CD8-positive, alpha-beta T cell (primary cell): ENCODE measurements at regions of chr16 and their contacts with region 1.

Region 1: DNA sequence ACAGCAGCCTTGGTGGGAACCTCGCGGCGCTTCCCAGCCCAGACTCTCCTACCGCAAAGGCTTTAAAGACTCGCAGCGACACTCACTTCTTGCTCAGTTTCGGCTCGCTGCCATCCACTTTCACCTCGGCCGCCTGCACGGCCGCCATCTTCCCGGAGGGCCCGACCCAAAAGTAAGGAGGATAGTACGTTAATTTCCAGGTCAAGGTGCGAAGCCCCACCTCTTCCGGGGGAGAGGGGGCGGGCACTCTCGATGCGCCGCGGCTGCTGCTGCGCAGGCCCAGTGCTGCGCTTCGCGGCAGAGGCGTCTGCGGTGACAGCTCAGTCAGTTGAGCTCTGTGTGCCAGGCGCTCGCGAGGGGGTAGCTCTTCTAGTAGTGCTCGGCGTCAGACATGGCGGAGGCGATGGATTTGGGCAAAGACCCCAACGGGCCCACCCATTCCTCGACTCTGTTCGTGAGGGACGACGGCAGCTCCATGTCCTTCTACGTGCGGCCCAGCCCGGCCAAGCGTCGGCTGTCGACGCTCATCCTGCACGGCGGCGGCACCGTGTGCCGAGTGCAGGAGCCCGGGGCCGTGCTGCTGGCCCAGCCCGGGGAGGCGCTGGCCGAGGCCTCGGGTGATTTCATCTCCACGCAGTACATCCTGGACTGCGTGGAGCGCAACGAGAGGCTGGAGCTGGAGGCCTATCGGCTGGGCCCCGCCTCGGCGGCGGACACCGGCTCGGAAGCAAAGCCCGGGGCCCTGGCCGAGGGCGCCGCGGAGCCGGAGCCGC is at the starts of genes KARS1 and TERF2IP:
- DNase-seq: peak; percentile 92 to 98 (median 94)
- ATAC-seq: peak; percentile 83
- H3K4me3 ChIP-seq: peak within 1 kb of the TSS; percentile 72 to 91
- H3K4me3 Mint-ChIP-seq: peak within 1 kb of the TSS; percentile 100
- H3K27ac ChIP-seq: peak within 1 kb of the TSS; percentile 89 to 92
- H3K27ac Mint-ChIP-seq: peak within 1 kb of the TSS; percentile 96
- H3K4me1 ChIP-seq: peaks cover 52% of the 10 kb centered on the region
- H3K4me1 Mint-ChIP-seq: peaks cover 69% of the 10 kb centered on the region
- H3K27me3 ChIP-seq: no peaks in the 10 kb centered on the region
- H3K27me3 Mint-ChIP-seq: no peaks in the 10 kb centered on the region
- CTCF ChIP-seq: no peak
- total RNA-seq, gene KARS1: 162 to 168 TPM
- total RNA-seq, gene TERF2IP: 107 to 112 TPM

Region 2: DNA sequence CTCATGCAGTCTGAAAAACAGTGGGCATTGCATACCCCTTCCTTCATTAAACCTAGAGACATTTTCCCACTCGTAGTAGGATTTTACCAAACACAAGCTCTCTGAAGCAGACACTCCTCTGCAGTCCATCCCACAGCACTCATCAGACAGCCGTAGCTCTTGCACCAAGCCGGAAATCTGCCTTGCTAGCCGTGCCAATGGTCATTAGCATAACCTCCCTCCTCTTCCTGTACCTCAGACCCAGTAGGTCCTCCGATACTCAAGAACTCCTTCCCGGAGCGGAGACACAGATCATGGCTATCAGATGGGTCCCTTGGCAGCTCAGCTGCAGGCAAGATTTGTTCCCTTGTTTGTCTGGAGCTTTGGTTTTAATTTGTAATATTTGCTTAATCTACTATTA is 1834.2 kb before region 1 on chr16:
- CTCF ChIA-PET with region 1: no interaction called
- POLR2A ChIA-PET with region 1: no interaction called
- intact Hi-C with region 1: no loop called
- DNase-seq: no peak
- ATAC-seq: no peak
- H3K4me3 ChIP-seq: no peak overlapping the region
- H3K4me3 Mint-ChIP-seq: no peak overlapping the region
- H3K27ac ChIP-seq: no peak overlapping the region
- H3K27ac Mint-ChIP-seq: no peak overlapping the region
- H3K4me1 ChIP-seq: no peaks in the 10 kb centered on the region
- H3K4me1 Mint-ChIP-seq: no peaks in the 10 kb centered on the region
- H3K27me3 ChIP-seq: no peaks in the 10 kb centered on the region
- H3K27me3 Mint-ChIP-seq: no peaks in the 10 kb centered on the region
- CTCF ChIP-seq: no peak

Region 3: GRCh38 chr16:74666425-74667254 is 981.0 kb before region 1 on chr16 and contains the start of gene RFWD3:
- CTCF ChIA-PET with region 1: no interaction called
- POLR2A ChIA-PET with region 1: interaction called, 6 read pairs
- intact Hi-C with region 1: loop called in 1 of 2 experiments (anchors 5 kb)
- DNase-seq: peak; percentile 91 to 99 (median 95)
- ATAC-seq: peak; percentile 98
- H3K4me3 ChIP-seq: peak within 1 kb of the TSS; percentile 80 to 98
- H3K4me3 Mint-ChIP-seq: peak within 1 kb of the TSS; percentile 94
- H3K27ac ChIP-seq: peak within 1 kb of the TSS; percentile 85 to 90
- H3K27ac Mint-ChIP-seq: peak within 1 kb of the TSS; percentile 94
- H3K4me1 ChIP-seq: peaks cover 30% of the 10 kb centered on the region
- H3K4me1 Mint-ChIP-seq: peaks cover 36% of the 10 kb centered on the region
- H3K27me3 ChIP-seq: no peaks in the 10 kb centered on the region
- H3K27me3 Mint-ChIP-seq: no peaks in the 10 kb centered on the region
- CTCF ChIP-seq: no peak
- total RNA-seq, gene RFWD3: 43.7 to 49.7 TPM

Region 4: GRCh38 chr16:75148311-75149195 is 499.1 kb before region 1 on chr16 and contains the start of gene ZFP1:
- CTCF ChIA-PET with region 1: no interaction called
- POLR2A ChIA-PET with region 1: no interaction called
- intact Hi-C with region 1: loop called (anchors 1 to 5 kb)
- DNase-seq: peak; percentile 86 to 98 (median 95)
- ATAC-seq: peak; percentile 89
- H3K4me3 ChIP-seq: peak within 1 kb of the TSS; percentile 85 to 100
- H3K4me3 Mint-ChIP-seq: peak within 1 kb of the TSS; percentile 87
- H3K27ac ChIP-seq: peak within 1 kb of the TSS; percentile 84
- H3K27ac Mint-ChIP-seq: peak within 1 kb of the TSS; percentile 88
- H3K4me1 ChIP-seq: peaks cover 12% of the 10 kb centered on the region
- H3K4me1 Mint-ChIP-seq: peaks cover 16% of the 10 kb centered on the region
- H3K27me3 ChIP-seq: no peaks in the 10 kb centered on the region
- H3K27me3 Mint-ChIP-seq: no peaks in the 10 kb centered on the region
- CTCF ChIP-seq: no peak
- total RNA-seq, gene ZFP1: 11.9 to 12.9 TPM

Region 5: GRCh38 chr16:75495076-75495674 is 152.5 kb before region 1 on chr16 and contains the start of gene CHST6:
- CTCF ChIA-PET with region 1: no interaction called
- POLR2A ChIA-PET with region 1: no interaction called
- intact Hi-C with region 1: no loop called
- DNase-seq: peak in 4 of 9 experiments; percentile 1 to 42 (median 28)
- ATAC-seq: peak; percentile 46
- H3K4me3 ChIP-seq: peak within 1 kb of the TSS; percentile 15 to 48
- H3K4me3 Mint-ChIP-seq: peak within 1 kb of the TSS; percentile 72
- H3K27ac ChIP-seq: no peak within 1 kb of the TSS
- H3K27ac Mint-ChIP-seq: no peak within 1 kb of the TSS
- H3K4me1 ChIP-seq: peaks cover 5% of the 10 kb centered on the region
- H3K4me1 Mint-ChIP-seq: peaks cover 6% of the 10 kb centered on the region
- H3K27me3 ChIP-seq: peaks cover 7 to 11% of the 10 kb centered on the region in 2 experiments
- H3K27me3 Mint-ChIP-seq: peaks cover 33% of the 10 kb centered on the region
- CTCF ChIP-seq: no peak
- total RNA-seq, gene CHST6: not detected

Region 6: DNA sequence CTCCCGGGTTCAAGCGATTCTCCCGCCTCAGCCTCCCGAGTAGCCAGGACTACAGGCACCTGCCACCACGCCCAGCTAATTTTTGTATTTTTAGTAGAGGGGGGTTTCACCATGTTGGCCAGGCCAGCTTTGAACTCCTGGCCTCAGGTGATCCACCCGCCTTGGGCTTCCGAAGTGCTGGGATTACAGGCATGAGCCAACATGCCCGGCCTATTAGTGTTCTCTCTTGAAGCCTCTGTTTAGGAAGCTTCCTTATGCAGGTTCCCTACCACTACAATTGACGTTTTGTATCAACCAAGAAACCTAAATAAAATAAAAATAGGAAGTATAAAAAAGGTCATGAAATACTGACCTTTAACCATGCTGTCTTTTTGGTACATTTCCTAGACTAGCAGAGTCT is 127.8 kb before region 1 on chr16:
- CTCF ChIA-PET with region 1: interaction called, 5 read pairs
- POLR2A ChIA-PET with region 1: interaction called, 19 read pairs
- intact Hi-C with region 1: loop called (anchors 1 to 2 kb)
- DNase-seq: no peak
- ATAC-seq: no peak
- H3K4me3 ChIP-seq: no peak overlapping the region
- H3K4me3 Mint-ChIP-seq: no peak overlapping the region
- H3K27ac ChIP-seq: no peak overlapping the region
- H3K27ac Mint-ChIP-seq: no peak overlapping the region
- H3K4me1 ChIP-seq: peaks cover 4% of the 10 kb centered on the region
- H3K4me1 Mint-ChIP-seq: peaks cover 16% of the 10 kb centered on the region
- H3K27me3 ChIP-seq: no peaks in the 10 kb centered on the region
- H3K27me3 Mint-ChIP-seq: no peaks in the 10 kb centered on the region
- CTCF ChIP-seq: no peak

Region 7: GRCh38 chr16:75614066-75614897 is 33.4 kb before region 1 on chr16:
- CTCF ChIA-PET with region 1: interaction called, 4 read pairs
- POLR2A ChIA-PET with region 1: interaction called, 109 read pairs
- intact Hi-C with region 1: no loop called
- DNase-seq: no peak
- ATAC-seq: no peak
- H3K4me3 ChIP-seq: no peak overlapping the region
- H3K4me3 Mint-ChIP-seq: no peak overlapping the region
- H3K27ac ChIP-seq: peak overlapping the region in 1 of 2 experiments; percentile 27
- H3K27ac Mint-ChIP-seq: no peak overlapping the region
- H3K4me1 ChIP-seq: no peaks in the 10 kb centered on the region
- H3K4me1 Mint-ChIP-seq: peaks cover 37% of the 10 kb centered on the region
- H3K27me3 ChIP-seq: no peaks in the 10 kb centered on the region
- H3K27me3 Mint-ChIP-seq: no peaks in the 10 kb centered on the region
- CTCF ChIP-seq: no peak

Region 8: DNA sequence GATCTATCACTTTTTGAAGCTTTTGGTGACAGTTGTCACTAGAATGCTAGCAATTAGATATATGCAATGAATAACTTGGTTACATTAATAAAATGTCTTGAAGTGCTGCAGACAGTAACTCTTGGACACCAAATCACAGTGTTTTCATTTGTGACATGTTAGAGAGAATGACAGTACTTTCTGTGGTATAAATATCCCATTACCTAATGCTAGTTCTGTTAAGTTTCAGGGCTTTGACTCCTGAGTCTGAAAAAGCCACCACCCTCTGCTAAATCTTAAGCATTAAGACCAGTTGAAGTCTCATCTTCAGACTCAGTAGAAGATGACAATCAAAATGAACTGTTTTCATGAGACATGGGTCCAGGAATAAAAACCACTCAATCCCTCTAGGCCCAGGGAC is 39.7 kb after region 1 on chr16:
- CTCF ChIA-PET with region 1: no interaction called
- POLR2A ChIA-PET with region 1: no interaction called
- intact Hi-C with region 1: loop called in 1 of 2 experiments (anchors 1 kb)
- DNase-seq: no peak
- ATAC-seq: no peak
- H3K4me3 ChIP-seq: no peak overlapping the region
- H3K4me3 Mint-ChIP-seq: no peak overlapping the region
- H3K27ac ChIP-seq: no peak overlapping the region
- H3K27ac Mint-ChIP-seq: no peak overlapping the region
- H3K4me1 ChIP-seq: no peaks in the 10 kb centered on the region
- H3K4me1 Mint-ChIP-seq: peaks cover 2% of the 10 kb centered on the region
- H3K27me3 ChIP-seq: no peaks in the 10 kb centered on the region
- H3K27me3 Mint-ChIP-seq: no peaks in the 10 kb centered on the region
- CTCF ChIP-seq: no peak